Activated T-helper 1 cell treated with anti-CD3 and anti-CD28 coated beads, Interleukin-12 subunit alpha, Interleukin-12 subunit beta, Interleukin-2, Interleukin-4 antibody, amounts not matched to agents 30 ng/mL and 10 ng/mL and 1 ng/mL, durations not matched to agents 14 hours and 24 hours and 36 hours (primary cell): ENCODE measurements at regions of chr11 and their contacts with region 1.

Region 1: DNA sequence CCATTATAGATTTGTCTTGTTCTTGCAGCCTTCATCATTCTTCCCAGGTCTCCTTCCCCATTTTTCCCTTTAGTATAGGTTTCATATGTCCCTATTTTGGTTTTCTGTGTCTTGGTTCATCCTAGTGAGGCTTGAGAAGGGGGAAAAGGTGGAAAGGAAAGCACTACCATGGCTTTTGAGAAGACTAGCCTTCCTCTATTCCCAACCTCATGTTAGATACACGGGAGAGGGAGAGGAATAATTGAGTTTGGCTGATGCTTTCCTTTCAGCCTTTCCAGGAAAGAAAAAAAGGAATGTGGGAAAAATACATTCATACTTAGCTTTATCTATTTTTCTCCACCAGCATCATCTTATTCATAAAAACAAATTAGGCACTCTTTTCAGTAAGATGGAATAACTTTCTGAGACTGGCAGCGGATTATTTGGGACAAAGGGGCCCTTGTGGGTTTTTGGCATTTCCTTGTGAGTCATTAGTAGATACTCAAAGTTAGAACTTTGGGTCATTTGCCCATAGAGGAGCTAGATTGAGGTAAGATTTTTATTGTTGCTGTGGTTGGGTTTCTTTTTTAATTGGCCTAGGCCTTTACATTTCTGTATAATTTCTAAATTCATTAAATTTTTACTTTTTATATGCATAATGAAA is 23.8 kb downstream of the CAPRIN1 start:
- DNase-seq: no peak
- H3K4me3 Mint-ChIP-seq: no peak overlapping the region
- H3K27ac Mint-ChIP-seq: peak overlapping the region; percentile 29
- H3K4me1 Mint-ChIP-seq: peaks cover 34% of the 10 kb centered on the region
- H3K27me3 Mint-ChIP-seq: no peaks in the 10 kb centered on the region

Region 2: DNA sequence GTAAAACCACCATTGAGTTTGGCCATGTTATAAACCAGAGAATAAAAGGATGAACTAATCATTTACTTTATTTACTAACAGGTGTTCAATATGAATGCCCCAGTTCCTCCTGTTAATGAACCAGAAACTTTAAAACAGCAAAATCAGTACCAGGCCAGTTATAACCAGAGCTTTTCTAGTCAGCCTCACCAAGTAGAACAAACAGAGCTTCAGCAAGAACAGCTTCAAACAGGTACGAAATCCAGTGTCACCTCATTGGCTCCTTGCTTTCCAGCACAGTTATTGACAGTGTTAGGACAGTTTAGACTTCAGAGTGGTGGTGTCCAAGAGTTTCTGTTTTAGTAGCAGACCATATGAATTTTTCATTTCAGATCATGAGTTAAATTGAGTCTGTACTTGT is 16.5 kb after region 1 on chr11:
- intact Hi-C with region 1: loop called (anchors 2 kb)
- DNase-seq: no peak
- H3K4me3 Mint-ChIP-seq: no peak overlapping the region
- H3K27ac Mint-ChIP-seq: peak overlapping the region; percentile 3
- H3K4me1 Mint-ChIP-seq: no peaks in the 10 kb centered on the region
- H3K27me3 Mint-ChIP-seq: no peaks in the 10 kb centered on the region